Endothelial cell of umbilical vein (primary cell): ENCODE measurements at regions of chr12 and their contacts with region 1.

Region 1: DNA sequence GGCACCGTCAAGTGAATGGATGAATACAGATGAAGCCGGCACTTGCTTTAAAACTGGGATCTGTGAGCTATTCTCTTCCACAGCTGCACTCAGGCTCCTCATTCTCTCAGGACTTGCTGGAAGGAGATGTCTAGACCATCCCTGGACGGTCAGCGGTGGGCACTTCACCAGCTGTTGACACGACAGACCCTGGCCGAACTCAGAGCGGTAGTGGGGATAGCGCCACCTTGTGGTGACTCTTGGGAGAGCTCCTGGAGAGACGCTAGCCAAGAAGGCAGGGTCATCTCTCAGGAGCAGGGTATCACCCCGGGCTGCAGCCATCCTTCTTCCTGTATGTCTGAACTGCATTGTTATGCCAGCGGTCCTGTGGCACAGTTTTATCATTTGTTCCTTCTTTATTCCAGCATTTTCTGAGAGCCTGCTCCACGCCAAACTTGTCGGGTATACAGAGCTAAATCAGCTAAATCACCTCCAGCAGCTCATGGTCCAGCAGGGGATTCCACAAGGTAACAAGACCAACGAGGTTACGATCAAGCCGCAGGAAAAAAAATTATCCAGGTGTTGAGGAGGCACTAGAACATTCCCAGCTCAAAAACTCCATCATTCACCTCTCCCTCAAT is 10.0 kb downstream of the WNT1 start:
- DNase-seq: peak; percentile 61
- H3K4me3 ChIP-seq: no peak overlapping the region
- H3K27ac ChIP-seq: no peak overlapping the region
- H3K4me1 ChIP-seq: no peaks in the 10 kb centered on the region
- H3K27me3 ChIP-seq: peaks cover 53 to 60% of the 10 kb centered on the region in 2 experiments
- CTCF ChIP-seq: peak; percentile 92 to 93
- POLR2A ChIP-seq: no peak

Region 2: GRCh38 chr12:48142818-48143674 is 845.1 kb before region 1 on chr12:
- CTCF ChIA-PET with region 1: no interaction called
- POLR2A ChIA-PET with region 1: no interaction called
- dilution Hi-C with region 1: no loop called
- intact Hi-C with region 1: no loop called
- DNase-seq: no peak
- H3K4me3 ChIP-seq: no peak overlapping the region
- H3K27ac ChIP-seq: no peak overlapping the region
- H3K4me1 ChIP-seq: no peaks in the 10 kb centered on the region
- H3K27me3 ChIP-seq: no peaks in the 10 kb centered on the region
- CTCF ChIP-seq: no peak
- POLR2A ChIP-seq: no peak

Region 3: GRCh38 chr12:48903982-48904411 is 84.1 kb before region 1 on chr12:
- CTCF ChIA-PET with region 1: interaction called, 10 read pairs
- POLR2A ChIA-PET with region 1: no interaction called
- dilution Hi-C with region 1: no loop called
- intact Hi-C with region 1: no loop called
- DNase-seq: peak; percentile 76
- H3K4me3 ChIP-seq: peak overlapping the region in 2 of 3 experiments; percentile 32 to 46
- H3K27ac ChIP-seq: no peak overlapping the region
- H3K4me1 ChIP-seq: peaks cover 3% of the 10 kb centered on the region
- H3K27me3 ChIP-seq: no peaks in the 10 kb centered on the region
- CTCF ChIP-seq: peak; percentile 62 to 77
- POLR2A ChIP-seq: no peak

Region 4: GRCh38 chr12:48957141-48958048 is 30.7 kb before region 1 on chr12 and contains the start of gene ARF3:
- CTCF ChIA-PET with region 1: interaction called, 15 read pairs
- POLR2A ChIA-PET with region 1: no interaction called
- dilution Hi-C with region 1: no loop called
- intact Hi-C with region 1: no loop called
- DNase-seq: peak; percentile 94
- H3K4me3 ChIP-seq: peak within 1 kb of the TSS; percentile 71 to 99 (median 90)
- H3K27ac ChIP-seq: peak within 1 kb of the TSS; percentile 76
- H3K4me1 ChIP-seq: peaks cover 31% of the 10 kb centered on the region
- H3K27me3 ChIP-seq: no peaks in the 10 kb centered on the region
- CTCF ChIP-seq: no peak
- POLR2A ChIP-seq: peak; percentile 54
- total RNA-seq, gene ARF3: 172 and 187 TPM in 2 replicates

Region 5: GRCh38 chr12:48969833-48970701 is 18.1 kb before region 1 on chr12:
- CTCF ChIA-PET with region 1: interaction called, 64 read pairs
- POLR2A ChIA-PET with region 1: no interaction called
- dilution Hi-C with region 1: no loop called
- intact Hi-C with region 1: loop called (anchors 2 kb)
- DNase-seq: no peak
- H3K4me3 ChIP-seq: no peak overlapping the region
- H3K27ac ChIP-seq: no peak overlapping the region
- H3K4me1 ChIP-seq: no peaks in the 10 kb centered on the region
- H3K27me3 ChIP-seq: peaks cover 56% of the 10 kb centered on the region in 2 experiments
- CTCF ChIP-seq: no peak
- POLR2A ChIP-seq: no peak

Region 6: GRCh38 chr12:48977315-48978281 is 10.5 kb before region 1 on chr12:
- CTCF ChIA-PET with region 1: interaction called, 175 read pairs
- POLR2A ChIA-PET with region 1: no interaction called
- dilution Hi-C with region 1: no loop called
- intact Hi-C with region 1: loop called (anchors 2 kb)
- DNase-seq: no peak
- H3K4me3 ChIP-seq: no peak overlapping the region
- H3K27ac ChIP-seq: no peak overlapping the region
- H3K4me1 ChIP-seq: peaks cover 13% of the 10 kb centered on the region
- H3K27me3 ChIP-seq: peaks cover 63 to 66% of the 10 kb centered on the region in 2 experiments
- CTCF ChIP-seq: peak; percentile 62 to 90
- POLR2A ChIP-seq: no peak